ENCODE measurements at regions of chr7 and their contacts with region 1.

Region 1: GRCh38 chr7:74164985-74165456 is 9.1 kb upstream of the EIF4H start:
- DNase-seq: peak; percentile 77
- H3K4me3 ChIP-seq: no peak overlapping the region
- H3K27ac ChIP-seq: no peak overlapping the region
- H3K4me1 ChIP-seq: peaks cover 18% of the 10 kb centered on the region
- H3K27me3 ChIP-seq: no peaks in the 10 kb centered on the region
- CTCF ChIP-seq: peak; percentile 33 to 49 (median 49)
- POLR2A ChIP-seq: no peak

Region 2: GRCh38 chr7:74070619-74070921 is 94.5 kb before region 1 on chr7:
- intact Hi-C with region 1: loop called (anchors 10 kb)
- DNase-seq: no peak
- H3K4me3 ChIP-seq: no peak overlapping the region
- H3K27ac ChIP-seq: no peak overlapping the region
- H3K4me1 ChIP-seq: no peaks in the 10 kb centered on the region
- H3K27me3 ChIP-seq: no peaks in the 10 kb centered on the region
- CTCF ChIP-seq: no peak
- POLR2A ChIP-seq: no peak